ENCODE measurements at regions of chr4 and their contacts with region 1.

Region 1: GRCh38 chr4:173013232-173013930 is 155.2 kb upstream of the GALNT7 start:
- DNase-seq: peak; percentile 87
- H3K4me3 Mint-ChIP-seq: no peak overlapping the region
- H3K27ac Mint-ChIP-seq: no peak overlapping the region
- H3K4me1 Mint-ChIP-seq: no peaks in the 10 kb centered on the region
- H3K27me3 Mint-ChIP-seq: peaks cover 9% of the 10 kb centered on the region

Region 2: DNA sequence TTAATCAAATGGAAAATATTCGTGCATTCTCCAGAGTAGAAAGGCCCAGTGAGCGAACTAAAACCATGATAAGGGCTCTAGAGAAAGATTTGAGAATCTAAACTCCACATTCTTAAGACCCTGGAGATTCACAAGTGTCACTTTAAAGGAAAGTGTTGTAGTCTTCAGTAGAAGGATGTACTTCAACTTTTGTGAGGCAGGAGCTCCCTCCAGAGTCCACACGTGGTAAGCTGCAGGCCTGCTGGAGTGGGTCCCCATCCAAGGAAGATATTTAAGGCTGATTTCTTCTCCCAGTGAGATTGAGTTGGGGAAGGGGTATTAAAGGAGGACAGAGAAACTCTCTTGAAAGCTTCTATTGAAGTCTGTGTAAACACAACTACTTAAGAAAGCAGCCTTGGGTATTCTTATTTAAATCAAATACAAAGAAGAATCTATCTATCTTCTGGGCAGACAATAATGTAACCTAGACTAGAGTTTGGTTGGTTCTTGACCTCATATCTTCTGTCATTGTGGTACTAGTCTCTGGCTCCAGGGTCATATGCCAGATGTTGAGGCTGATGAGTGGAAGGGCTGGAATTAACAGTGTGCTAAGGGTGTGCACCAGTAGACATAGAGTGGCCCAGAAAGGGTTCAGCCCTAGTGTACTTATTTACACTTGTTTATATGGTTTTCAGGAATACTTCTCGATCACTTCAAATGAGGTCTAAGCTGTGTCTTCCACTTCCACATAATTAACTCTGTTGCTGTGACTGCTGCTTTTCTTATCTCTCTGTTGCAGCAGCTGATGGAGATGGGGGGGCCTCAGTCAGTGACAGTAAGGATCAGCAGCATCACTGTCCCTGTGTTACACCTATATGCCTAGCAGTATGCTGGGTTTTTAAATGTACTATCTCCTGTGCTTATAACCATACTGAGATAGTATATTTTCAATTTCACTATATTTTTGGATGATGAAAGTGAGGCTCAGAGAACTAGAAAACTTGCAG is 244.6 kb after region 1 on chr4:
- intact Hi-C with region 1: loop called (anchors 1 kb)
- DNase-seq: peak; percentile 87
- H3K4me3 Mint-ChIP-seq: no peak overlapping the region
- H3K27ac Mint-ChIP-seq: no peak overlapping the region
- H3K4me1 Mint-ChIP-seq: peaks cover 5% of the 10 kb centered on the region
- H3K27me3 Mint-ChIP-seq: no peaks in the 10 kb centered on the region

Region 3: DNA sequence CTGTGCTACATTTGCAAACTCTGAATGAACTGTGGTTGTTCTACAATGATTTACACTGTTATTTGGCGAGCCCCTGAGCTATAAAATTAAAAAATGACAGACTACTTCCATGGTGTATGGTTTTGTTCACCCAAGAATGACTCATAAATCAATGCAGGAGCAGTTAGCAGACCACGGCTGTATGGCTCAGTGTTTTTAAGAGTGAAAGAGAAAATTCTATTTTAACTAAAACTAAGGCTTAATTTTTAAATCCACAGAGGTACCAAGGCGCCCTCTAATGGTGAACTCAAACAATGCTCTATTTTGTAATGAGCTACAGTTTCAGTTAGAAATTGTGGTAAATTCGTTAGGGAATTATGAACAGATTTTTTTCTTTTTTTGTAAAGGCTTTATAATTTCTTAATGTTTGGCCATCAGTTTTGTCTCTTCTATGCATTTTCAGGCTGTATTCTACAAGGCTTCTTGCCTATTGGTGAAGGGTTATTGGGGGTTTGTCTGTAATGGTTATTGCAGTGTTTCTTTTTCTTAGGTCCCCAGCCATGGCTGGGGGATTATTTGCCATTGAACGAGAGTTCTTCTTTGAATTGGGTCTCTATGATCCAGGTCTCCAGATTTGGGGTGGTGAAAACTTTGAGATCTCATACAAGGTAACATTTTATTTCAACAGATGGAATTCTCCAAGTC is 288.3 kb after region 1 on chr4:
- intact Hi-C with region 1: loop called (anchors 1 kb)
- DNase-seq: peak; percentile 73
- H3K4me3 Mint-ChIP-seq: no peak overlapping the region
- H3K27ac Mint-ChIP-seq: no peak overlapping the region
- H3K4me1 Mint-ChIP-seq: no peaks in the 10 kb centered on the region
- H3K27me3 Mint-ChIP-seq: no peaks in the 10 kb centered on the region

Measured in activated CD4-positive, alpha-beta T cell treated with anti-CD3 and anti-CD28 coated beads, Interleukin-2, amount 10 ng/mL, durations not matched to agents 24 days and 14 days (primary cell).